Activated CD4-positive, alpha-beta memory T cell treated with anti-CD3 and anti-CD28 coated beads for 36 hours (primary cell): ENCODE measurements at regions of chr9 and their contacts with region 1.

Region 1: DNA sequence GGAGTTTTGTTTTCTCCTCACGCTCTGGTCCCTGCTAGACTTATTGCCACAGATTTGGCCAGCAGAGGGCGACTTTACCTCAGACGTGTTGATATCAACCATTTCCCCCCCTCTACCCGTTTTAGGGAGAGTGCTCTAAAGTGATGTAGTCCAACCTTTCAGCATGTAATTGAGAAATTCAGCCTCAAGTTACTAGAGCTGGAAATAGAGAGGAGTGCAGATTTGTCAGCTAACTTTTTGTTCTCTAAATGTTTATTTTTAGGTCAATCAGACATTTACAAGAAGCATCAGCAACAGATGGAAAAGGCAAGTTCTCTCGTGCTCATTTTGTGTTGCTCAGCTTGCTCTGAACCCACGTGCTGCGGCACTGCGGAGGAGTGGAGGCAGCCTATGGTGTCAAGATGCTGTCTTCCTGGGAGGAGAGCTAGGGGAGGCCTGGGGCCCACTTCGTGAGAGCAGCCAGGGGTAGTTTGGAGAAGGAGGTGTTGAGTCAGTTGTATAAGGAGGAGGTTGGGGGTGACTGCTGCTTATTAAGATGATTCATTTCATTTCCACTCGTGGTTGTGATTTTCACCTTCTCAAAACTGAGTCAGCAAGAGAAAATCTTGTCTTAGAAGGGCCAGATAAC is 53.6 kb downstream of the GPR107 start:
- DNase-seq: peak; percentile 89
- H3K4me3 Mint-ChIP-seq: no peak overlapping the region
- H3K27ac Mint-ChIP-seq: peak overlapping the region; percentile 82
- H3K4me1 Mint-ChIP-seq: peaks cover 41% of the 10 kb centered on the region
- H3K27me3 Mint-ChIP-seq: no peaks in the 10 kb centered on the region

Region 2: GRCh38 chr9:130118841-130119518 is 11.6 kb after region 1 on chr9:
- CTCF ChIA-PET with region 1: interaction called, 11 read pairs
- POLR2A ChIA-PET with region 1: no interaction called
- intact Hi-C with region 1: no loop called
- DNase-seq: no peak
- H3K4me3 Mint-ChIP-seq: no peak overlapping the region
- H3K27ac Mint-ChIP-seq: no peak overlapping the region
- H3K4me1 Mint-ChIP-seq: no peaks in the 10 kb centered on the region
- H3K27me3 Mint-ChIP-seq: no peaks in the 10 kb centered on the region

Region 3: GRCh38 chr9:130167927-130168326 is 60.6 kb after region 1 on chr9:
- CTCF ChIA-PET with region 1: interaction called, 9 read pairs
- POLR2A ChIA-PET with region 1: no interaction called
- intact Hi-C with region 1: loop called (anchors 10 kb)
- DNase-seq: no peak
- H3K4me3 Mint-ChIP-seq: no peak overlapping the region
- H3K27ac Mint-ChIP-seq: no peak overlapping the region
- H3K4me1 Mint-ChIP-seq: peaks cover 8% of the 10 kb centered on the region
- H3K27me3 Mint-ChIP-seq: peaks cover 3% of the 10 kb centered on the region

Region 4: GRCh38 chr9:130243015-130243734 is 135.8 kb after region 1 on chr9:
- CTCF ChIA-PET with region 1: interaction called, 146 read pairs
- POLR2A ChIA-PET with region 1: interaction called, 4 read pairs
- intact Hi-C with region 1: loop called (anchors 1 kb)
- DNase-seq: peak; percentile 88
- H3K4me3 Mint-ChIP-seq: peak overlapping the region; percentile 53
- H3K27ac Mint-ChIP-seq: peak overlapping the region; percentile 7
- H3K4me1 Mint-ChIP-seq: peaks cover 32% of the 10 kb centered on the region
- H3K27me3 Mint-ChIP-seq: no peaks in the 10 kb centered on the region

Region 5: DNA sequence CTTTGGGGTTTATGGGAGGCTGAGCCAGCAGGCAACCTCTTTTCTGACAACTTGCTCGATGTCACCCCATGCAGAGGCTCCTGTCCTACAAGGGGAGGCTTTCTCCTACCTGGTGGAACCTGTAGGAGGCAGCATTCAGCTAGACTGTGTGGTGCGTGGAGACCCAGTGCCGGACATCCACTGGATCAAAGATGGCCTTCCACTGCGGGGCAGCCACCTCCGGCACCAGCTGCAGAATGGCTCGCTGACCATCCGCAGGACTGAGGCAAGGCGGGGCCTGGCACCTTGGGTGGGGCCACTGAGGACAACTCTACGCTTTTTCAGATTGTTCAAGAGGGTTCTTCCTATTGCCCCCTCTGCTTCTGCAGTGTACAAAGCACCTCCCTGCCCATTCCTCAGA is 301.3 kb after region 1 on chr9:
- CTCF ChIA-PET with region 1: no interaction called
- POLR2A ChIA-PET with region 1: no interaction called
- intact Hi-C with region 1: no loop called
- DNase-seq: no peak
- H3K4me3 Mint-ChIP-seq: no peak overlapping the region
- H3K27ac Mint-ChIP-seq: no peak overlapping the region
- H3K4me1 Mint-ChIP-seq: no peaks in the 10 kb centered on the region
- H3K27me3 Mint-ChIP-seq: peaks cover 2% of the 10 kb centered on the region

Region 6: GRCh38 chr9:130433168-130433946 is 326.0 kb after region 1 on chr9:
- CTCF ChIA-PET with region 1: no interaction called
- POLR2A ChIA-PET with region 1: no interaction called
- intact Hi-C with region 1: no loop called
- DNase-seq: peak; percentile 43
- H3K4me3 Mint-ChIP-seq: no peak overlapping the region
- H3K27ac Mint-ChIP-seq: no peak overlapping the region
- H3K4me1 Mint-ChIP-seq: peaks cover 3% of the 10 kb centered on the region
- H3K27me3 Mint-ChIP-seq: peaks cover 34% of the 10 kb centered on the region